IMR-90 (cell line): ENCODE measurements at regions of chr1 and their contacts with region 1.

Region 1: DNA sequence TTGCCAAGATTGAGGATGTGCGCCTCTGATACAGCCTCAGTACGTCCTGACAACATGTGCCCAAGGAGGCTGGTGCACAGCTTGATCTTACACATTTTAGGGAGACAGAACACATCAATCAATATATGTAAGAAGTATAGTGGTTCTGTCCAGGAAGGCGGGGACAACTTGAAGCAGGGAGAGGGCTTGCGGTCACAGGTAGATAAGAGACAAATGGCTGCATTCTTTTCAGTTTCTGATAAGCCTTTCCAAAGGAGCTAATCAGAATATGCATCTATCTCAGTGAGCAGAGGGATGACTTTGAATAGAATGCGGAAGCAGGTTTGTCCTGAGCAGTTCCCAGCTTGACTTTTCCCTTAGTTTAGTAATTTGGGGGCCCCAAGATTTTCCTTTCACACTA is 10.2 kb downstream of the DHCR24 start:
- DNase-seq: no peak
- ATAC-seq: no peak
- H3K4me3 ChIP-seq: no peak overlapping the region
- H3K27ac ChIP-seq: no peak overlapping the region
- H3K4me1 ChIP-seq: peaks cover 12% of the 10 kb centered on the region
- H3K27me3 ChIP-seq: no peaks in the 10 kb centered on the region
- CTCF ChIP-seq: no peak
- POLR2A ChIP-seq: no peak
- RAD21 ChIP-seq: no peak

Region 2: DNA sequence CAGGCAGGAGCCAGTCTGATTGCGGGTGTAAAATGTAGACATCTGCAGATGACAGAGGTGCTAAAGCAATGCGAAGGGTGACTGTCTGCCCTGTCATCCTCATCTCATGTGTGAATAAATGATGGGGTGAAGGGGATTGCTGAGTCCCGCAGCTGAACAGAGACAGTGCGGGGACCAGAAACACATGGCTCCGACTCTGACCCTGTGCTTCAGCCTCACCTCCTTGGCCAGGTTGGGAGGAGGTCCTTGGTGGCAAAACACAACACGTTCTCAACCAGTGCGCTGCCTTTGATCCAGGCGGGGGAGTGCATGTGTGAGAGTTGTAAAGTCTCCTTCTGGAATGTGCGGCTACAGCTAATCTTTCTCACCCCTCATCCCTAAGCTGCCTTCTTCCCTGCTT is 43.7 kb before region 1 on chr1:
- CTCF ChIA-PET with region 1: no interaction called
- POLR2A ChIA-PET with region 1: no interaction called
- dilution Hi-C with region 1: no loop called
- in situ Hi-C with region 1: no loop called
- intact Hi-C with region 1: no loop called
- DNase-seq: no peak
- ATAC-seq: no peak
- H3K4me3 ChIP-seq: no peak overlapping the region
- H3K27ac ChIP-seq: no peak overlapping the region
- H3K4me1 ChIP-seq: no peaks in the 10 kb centered on the region
- H3K27me3 ChIP-seq: peaks cover 41% of the 10 kb centered on the region
- CTCF ChIP-seq: no peak
- POLR2A ChIP-seq: no peak
- RAD21 ChIP-seq: no peak

Region 3: GRCh38 chr1:54886724-54887664 is 10.2 kb after region 1 on chr1 and contains the start of gene DHCR24:
- CTCF ChIA-PET with region 1: no interaction called
- POLR2A ChIA-PET with region 1: no interaction called
- dilution Hi-C with region 1: no loop called
- in situ Hi-C with region 1: no loop called
- intact Hi-C with region 1: loop called (anchors 1 kb)
- DNase-seq: peak; percentile 76
- ATAC-seq: peak; percentile 97
- H3K4me3 ChIP-seq: peak within 1 kb of the TSS; percentile 69
- H3K27ac ChIP-seq: peak within 1 kb of the TSS; percentile 2; the same call in 1 of the 2 replicates
- H3K4me1 ChIP-seq: peaks cover 18% of the 10 kb centered on the region
- H3K27me3 ChIP-seq: no peaks in the 10 kb centered on the region; the same call in 1 of the 2 replicates
- CTCF ChIP-seq: no peak
- POLR2A ChIP-seq: peak; percentile 60; the same call in 1 of the 2 replicates
- RAD21 ChIP-seq: no peak
- total RNA-seq, gene DHCR24: 194 and 206 TPM in 2 replicates